PC-9 (cell line): ENCODE measurements at regions of chr9 and their contacts with region 1.

Region 1: DNA sequence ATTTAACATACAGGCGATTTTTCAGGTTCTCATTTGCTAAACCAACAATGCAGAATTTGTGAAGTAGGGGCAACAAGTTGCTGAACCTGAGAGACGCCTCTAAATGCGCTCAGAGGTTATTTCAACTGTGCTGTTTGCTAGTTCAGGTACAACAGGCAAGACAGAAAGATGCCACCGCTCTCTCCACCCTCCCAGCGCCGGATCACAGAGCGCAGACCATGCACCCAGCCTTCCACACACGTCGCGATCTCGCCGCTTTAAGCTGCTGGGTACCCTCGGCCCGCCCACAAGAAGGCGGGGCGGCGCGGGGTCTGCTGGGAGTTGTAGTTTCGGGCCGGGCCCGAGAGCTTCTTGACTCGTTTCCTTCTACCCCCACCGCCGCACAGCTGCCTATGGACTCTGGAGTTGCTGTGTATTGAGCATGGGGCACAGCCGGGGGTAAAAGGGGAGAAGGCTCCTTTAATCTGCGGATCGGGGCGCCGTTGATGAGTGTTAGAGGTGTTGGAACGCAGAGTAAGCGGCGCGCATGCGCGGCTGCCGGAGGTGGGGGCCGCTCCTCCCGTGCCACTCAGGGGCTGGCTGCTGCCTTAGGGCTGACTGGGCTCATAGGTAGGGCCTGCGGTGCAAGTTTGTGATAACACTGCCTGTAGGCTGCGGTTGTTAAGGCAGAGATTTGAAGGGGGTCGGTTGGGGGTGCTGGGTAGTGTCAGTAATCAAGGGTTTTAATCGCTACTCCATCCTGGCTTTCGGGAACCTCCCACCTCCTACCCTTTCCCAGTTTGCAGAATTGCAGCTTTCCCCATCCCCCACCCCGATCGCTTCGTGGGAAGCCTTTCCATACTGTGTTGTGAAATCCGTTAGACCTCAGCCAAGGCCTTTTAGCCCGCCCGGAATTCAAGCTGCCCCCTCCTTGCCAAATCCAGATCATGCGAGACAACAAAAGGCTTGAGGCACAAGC is 40.3 kb upstream of the ABCA1 start:
- DNase-seq: peak; percentile 74 to 91
- H3K4me3 ChIP-seq: peak overlapping the region; percentile 99
- H3K27ac ChIP-seq: peak overlapping the region; percentile 85
- H3K4me1 ChIP-seq: peaks cover 26% of the 10 kb centered on the region
- H3K27me3 ChIP-seq: no peaks in the 10 kb centered on the region
- CTCF ChIP-seq: no peak

Region 2: DNA sequence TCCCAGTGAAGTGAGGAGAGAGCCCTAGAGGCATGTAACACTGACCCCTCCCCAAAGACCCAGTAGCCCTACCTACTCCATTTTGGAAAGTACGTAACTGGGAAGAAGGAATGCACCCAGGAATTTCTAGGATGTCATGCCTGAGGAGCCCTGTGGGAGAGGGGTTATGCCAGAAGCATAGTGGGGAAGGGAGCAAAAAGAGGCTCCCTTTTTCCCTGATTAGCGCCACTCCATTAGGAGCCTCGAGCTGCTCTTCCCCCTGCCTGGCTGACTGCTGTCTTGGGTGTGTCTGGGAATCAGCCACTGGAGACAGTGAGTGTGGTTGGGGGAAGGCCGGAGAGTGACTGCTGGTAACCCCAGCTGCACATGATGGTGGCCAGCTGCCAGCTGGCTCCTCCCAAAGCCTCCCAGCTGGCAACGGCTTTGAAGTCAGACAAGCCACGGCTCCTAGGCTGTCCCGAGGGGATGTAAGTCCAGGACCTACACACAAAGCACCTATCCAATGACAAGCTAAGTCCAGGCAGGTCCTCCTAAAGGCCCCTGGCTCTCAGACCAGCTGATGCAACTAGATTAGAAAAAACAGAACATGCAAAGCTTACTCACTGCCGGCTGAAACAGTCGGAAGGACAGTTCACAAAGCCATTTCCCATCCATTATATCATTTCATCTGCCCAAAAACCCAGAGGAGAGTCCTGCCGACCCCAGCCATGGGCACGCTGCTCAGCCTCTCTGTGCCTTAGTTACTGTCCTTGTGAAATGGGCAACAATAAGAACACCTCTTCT is 96.2 kb after region 1 on chr9:
- CTCF ChIA-PET with region 1: no interaction called
- POLR2A ChIA-PET with region 1: no interaction called
- intact Hi-C with region 1: loop called (anchors 10 kb)
- DNase-seq: peak; percentile 93 to 94
- H3K4me3 ChIP-seq: peak overlapping the region; percentile 36; the same call in 1 of the 2 replicates
- H3K27ac ChIP-seq: peak overlapping the region; percentile 97
- H3K4me1 ChIP-seq: peaks cover 43% of the 10 kb centered on the region
- H3K27me3 ChIP-seq: no peaks in the 10 kb centered on the region
- CTCF ChIP-seq: no peak